Mammary epithelial cell (primary cell): ENCODE measurements at regions of chr6 and their contacts with region 1.

Region 1: DNA sequence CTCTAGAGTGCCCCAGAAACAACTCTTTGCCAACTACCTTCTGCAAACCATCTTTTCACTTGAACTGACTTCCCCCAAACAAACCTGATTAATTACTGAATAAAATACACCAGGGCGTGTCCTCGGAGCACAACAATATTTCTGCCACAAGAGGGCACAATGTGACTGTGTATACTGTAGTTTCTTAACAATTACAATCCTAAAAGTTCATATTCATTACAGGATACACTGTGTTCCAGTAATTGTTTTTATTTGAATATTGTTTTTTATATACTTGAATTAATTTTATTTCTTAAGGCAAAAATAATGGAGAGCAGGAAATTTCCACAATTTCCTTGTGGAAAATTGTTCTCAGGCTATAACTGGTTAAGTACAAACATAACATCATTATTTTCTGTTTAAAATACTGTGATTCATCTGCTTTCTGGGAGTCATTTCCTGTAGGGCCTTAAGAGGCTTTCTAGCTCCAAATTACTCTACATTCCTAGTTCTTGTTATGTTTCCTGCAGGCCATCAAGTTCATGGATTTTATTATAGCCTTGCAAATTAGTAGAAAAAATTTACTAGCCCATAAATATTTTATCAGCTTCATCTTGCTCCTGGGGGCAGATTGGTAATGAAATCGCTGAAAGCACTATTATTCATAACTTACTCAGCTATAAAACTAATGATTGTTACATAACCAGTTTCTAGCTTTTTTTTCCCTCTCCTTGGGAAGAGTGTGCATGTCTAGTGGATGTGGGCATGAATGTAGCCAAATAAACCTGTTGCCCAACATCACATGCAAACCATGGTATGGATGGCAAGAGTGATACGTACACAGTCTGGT is 51.9 kb upstream of the SLC22A16 start:
- DNase-seq: peak; percentile 97
- H3K4me3 ChIP-seq: no peak overlapping the region
- H3K27ac ChIP-seq: peak overlapping the region; percentile 96
- H3K4me1 ChIP-seq: peaks cover 40% of the 10 kb centered on the region
- H3K27me3 ChIP-seq: no peaks in the 10 kb centered on the region
- CTCF ChIP-seq: peak; percentile 71 to 81

Region 2: GRCh38 chr6:110664933-110665332 is 136.6 kb after region 1 on chr6:
- CTCF ChIA-PET with region 1: no interaction called
- dilution Hi-C with region 1: no loop called
- in situ Hi-C with region 1: loop called in 1 of 2 experiments (anchors 10 kb)
- intact Hi-C with region 1: loop called (anchors 5 kb)
- DNase-seq: no peak
- H3K4me3 ChIP-seq: no peak overlapping the region
- H3K27ac ChIP-seq: no peak overlapping the region
- H3K4me1 ChIP-seq: peaks cover 16% of the 10 kb centered on the region
- H3K27me3 ChIP-seq: no peaks in the 10 kb centered on the region
- CTCF ChIP-seq: no peak

Region 3: DNA sequence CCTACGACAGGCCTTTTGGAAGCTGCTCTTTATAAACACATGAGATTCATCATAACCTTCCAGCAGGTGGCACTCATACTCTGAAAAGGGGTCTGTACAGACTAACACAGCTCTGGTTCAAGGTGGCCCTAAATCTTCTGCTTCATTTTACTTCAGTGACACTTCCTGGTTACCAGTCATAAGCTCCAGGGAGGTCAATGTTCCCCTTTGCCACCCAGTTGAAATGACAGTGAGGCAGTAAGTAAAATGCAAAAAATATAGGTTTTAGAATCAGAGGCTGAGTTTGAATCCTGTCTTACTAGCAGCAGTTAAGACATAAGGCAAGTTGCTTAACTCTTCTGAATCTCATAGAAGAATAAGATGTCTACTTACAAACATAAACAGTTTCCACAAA is 154.1 kb after region 1 on chr6:
- CTCF ChIA-PET with region 1: no interaction called
- dilution Hi-C with region 1: no loop called
- in situ Hi-C with region 1: loop called in 1 of 2 experiments (anchors 10 kb)
- intact Hi-C with region 1: loop called (anchors 1 kb)
- DNase-seq: peak; percentile 68
- H3K4me3 ChIP-seq: no peak overlapping the region
- H3K27ac ChIP-seq: no peak overlapping the region
- H3K4me1 ChIP-seq: peaks cover 3% of the 10 kb centered on the region
- H3K27me3 ChIP-seq: no peaks in the 10 kb centered on the region
- CTCF ChIP-seq: peak; percentile 50 to 75

Region 4: DNA sequence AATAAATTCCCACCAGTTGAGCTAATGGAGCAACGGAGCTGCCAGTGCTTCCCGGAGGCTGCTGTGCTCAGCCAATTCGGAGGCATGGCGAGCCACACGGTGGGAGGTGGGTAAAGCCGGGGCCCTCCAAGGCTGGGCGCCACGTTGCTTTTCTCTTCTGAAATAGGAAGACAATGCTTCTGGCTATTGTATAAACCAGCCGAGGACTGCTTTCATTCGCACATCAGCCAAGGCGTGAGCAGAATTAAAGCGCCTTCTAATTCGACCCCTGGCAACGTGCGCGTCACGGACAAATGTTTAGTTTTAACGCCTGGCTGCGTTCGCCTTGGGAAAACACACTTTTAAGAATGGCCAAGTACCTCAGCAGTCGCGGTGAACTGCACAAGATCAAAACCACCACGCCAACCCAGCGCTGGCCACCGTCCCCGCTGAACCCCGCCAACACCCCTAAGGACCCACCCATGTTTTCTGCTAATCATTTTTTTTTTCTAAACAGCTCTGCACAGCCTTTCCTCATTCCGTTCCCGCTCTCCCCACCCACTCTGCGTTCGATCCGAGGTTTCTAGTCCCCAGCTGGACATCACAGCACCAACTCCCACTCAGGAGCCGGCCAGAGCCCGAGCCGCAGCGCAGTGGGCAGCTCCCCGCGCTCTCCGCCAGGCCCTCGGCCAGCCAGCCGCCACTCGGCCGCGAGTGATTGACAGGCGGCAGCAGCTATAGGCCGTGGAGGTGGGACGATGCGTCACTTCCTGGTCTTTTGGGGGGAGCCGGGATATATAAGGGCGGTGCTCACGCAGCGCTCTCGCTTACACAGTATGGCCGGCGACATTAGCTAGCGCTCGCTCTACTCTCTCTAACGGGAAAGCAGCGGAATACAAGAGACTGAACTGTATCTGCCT is 345.9 kb after region 1 on chr6 and contains the start of gene AMD1:
- CTCF ChIA-PET with region 1: no interaction called
- dilution Hi-C with region 1: no loop called
- in situ Hi-C with region 1: loop called in 1 of 2 experiments (anchors 10 kb)
- intact Hi-C with region 1: loop called (anchors 1 kb)
- DNase-seq: peak; percentile 94
- H3K4me3 ChIP-seq: peak within 1 kb of the TSS; percentile 73 to 99 (median 85)
- H3K27ac ChIP-seq: peak within 1 kb of the TSS; percentile 91
- H3K4me1 ChIP-seq: peaks cover 18% of the 10 kb centered on the region
- H3K27me3 ChIP-seq: no peaks in the 10 kb centered on the region
- CTCF ChIP-seq: peak in 1 of 2 donors; percentile 1
- total RNA-seq, gene AMD1: 69.7 to 97.5 TPM

Region 5: DNA sequence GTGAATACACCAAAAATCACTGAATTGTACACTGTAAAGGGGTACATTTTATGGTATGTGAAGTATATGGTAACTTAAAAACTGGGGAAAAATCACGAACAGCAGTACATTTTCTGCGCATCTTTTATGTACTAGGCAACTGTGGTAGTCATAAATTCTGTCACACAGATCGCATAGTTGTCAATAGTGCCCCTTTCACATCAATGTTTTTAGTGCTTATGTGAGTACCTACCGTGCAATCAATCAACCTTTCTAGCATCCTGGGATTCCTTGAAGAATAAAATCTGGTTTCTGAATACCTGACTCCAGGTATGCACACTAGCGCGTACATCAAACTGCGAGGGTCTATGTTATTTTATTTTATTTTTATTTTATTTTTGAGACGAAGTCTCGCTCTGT is 452.9 kb after region 1 on chr6:
- CTCF ChIA-PET with region 1: no interaction called
- dilution Hi-C with region 1: loop called (anchors 10 kb)
- in situ Hi-C with region 1: no loop called
- intact Hi-C with region 1: loop called (anchors 1 kb)
- DNase-seq: no peak
- H3K4me3 ChIP-seq: peak overlapping the region; percentile 55 to 81 (median 79)
- H3K27ac ChIP-seq: peak overlapping the region; percentile 83
- H3K4me1 ChIP-seq: peaks cover 9% of the 10 kb centered on the region
- H3K27me3 ChIP-seq: no peaks in the 10 kb centered on the region
- CTCF ChIP-seq: no peak

Region 6: DNA sequence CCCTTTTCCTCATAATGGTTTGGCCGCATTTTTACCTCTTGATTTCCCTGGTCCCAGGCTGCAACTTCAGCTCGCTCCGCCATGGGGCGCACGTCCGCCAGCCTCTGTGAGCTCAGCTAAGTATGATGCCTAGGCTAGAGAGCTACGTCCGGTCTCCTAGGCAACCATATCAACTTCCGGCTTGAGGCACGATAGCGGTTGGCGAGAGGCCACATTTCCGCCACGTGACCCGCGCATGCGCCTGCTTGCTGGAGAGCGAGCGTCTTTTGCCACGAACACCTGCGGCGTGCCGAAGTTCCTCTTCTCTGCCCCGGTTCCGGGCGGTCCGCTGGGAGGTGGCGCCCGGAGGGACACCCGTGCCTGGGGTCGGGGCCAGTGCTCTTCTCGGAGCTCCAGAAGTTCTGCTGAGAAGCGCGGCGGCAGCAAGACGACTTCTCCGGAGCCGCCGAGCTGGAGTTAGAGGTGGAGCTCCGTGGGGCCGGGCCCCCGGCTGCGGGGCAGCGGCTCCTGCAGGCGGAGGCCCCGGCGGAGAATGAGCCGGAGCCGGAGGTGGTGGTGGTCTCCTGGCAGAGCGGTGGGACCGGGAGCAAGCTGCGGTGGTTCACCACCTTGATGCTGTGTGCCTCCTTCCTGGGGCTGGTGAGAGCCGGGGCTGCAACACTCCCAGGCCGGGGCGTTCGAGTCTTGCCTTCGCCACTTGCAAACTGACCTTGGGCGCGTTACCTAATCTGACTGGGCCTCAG is 730.9 kb after region 1 on chr6:
- CTCF ChIA-PET with region 1: no interaction called
- dilution Hi-C with region 1: no loop called
- in situ Hi-C with region 1: no loop called
- intact Hi-C with region 1: loop called (anchors 10 kb)
- DNase-seq: peak; percentile 98
- H3K4me3 ChIP-seq: peak overlapping the region; percentile 65 to 84 (median 80)
- H3K27ac ChIP-seq: peak overlapping the region; percentile 68
- H3K4me1 ChIP-seq: peaks cover 22% of the 10 kb centered on the region
- H3K27me3 ChIP-seq: no peaks in the 10 kb centered on the region
- CTCF ChIP-seq: peak; percentile 94 to 96